ENCODE measurements at regions of chr20 and their contacts with region 1.

Region 1: GRCh38 chr20:50713657-50714101 is 17.7 kb upstream of the PARD6B start:
- DNase-seq: peak; percentile 61
- ATAC-seq: peak; percentile 65
- H3K4me3 ChIP-seq: no peak overlapping the region
- H3K27ac ChIP-seq: no peak overlapping the region
- H3K4me1 ChIP-seq: peaks cover 15% of the 10 kb centered on the region
- H3K27me3 ChIP-seq: no peaks in the 10 kb centered on the region
- CTCF ChIP-seq: peak; percentile 59
- POLR2A ChIP-seq: no peak
- RAD21 ChIP-seq: peak; percentile 66

Region 2: GRCh38 chr20:50675651-50676376 is 37.9 kb before region 1 on chr20:
- CTCF ChIA-PET with region 1: no interaction called
- POLR2A ChIA-PET with region 1: no interaction called
- dilution Hi-C with region 1: no loop called
- in situ Hi-C with region 1: no loop called
- intact Hi-C with region 1: loop called (anchors 1 kb)
- DNase-seq: no peak
- ATAC-seq: peak; percentile 43; the same call in 1 of the 2 replicates
- H3K4me3 ChIP-seq: no peak overlapping the region
- H3K27ac ChIP-seq: no peak overlapping the region
- H3K4me1 ChIP-seq: peaks cover 18% of the 10 kb centered on the region
- H3K27me3 ChIP-seq: no peaks in the 10 kb centered on the region
- CTCF ChIP-seq: no peak
- POLR2A ChIP-seq: no peak
- RAD21 ChIP-seq: no peak

Region 3: GRCh38 chr20:50724851-50725721 is 11.4 kb after region 1 on chr20:
- CTCF ChIA-PET with region 1: interaction called, 11 read pairs
- POLR2A ChIA-PET with region 1: interaction called, 3 read pairs
- dilution Hi-C with region 1: no loop called
- in situ Hi-C with region 1: no loop called
- intact Hi-C with region 1: no loop called
- DNase-seq: peak; percentile 96
- ATAC-seq: peak; percentile 97
- H3K4me3 ChIP-seq: no peak overlapping the region
- H3K27ac ChIP-seq: peak overlapping the region; percentile 66
- H3K4me1 ChIP-seq: peaks cover 13% of the 10 kb centered on the region
- H3K27me3 ChIP-seq: no peaks in the 10 kb centered on the region
- CTCF ChIP-seq: no peak
- POLR2A ChIP-seq: no peak
- RAD21 ChIP-seq: peak; percentile 39

Region 4: GRCh38 chr20:50848341-50848808 is 134.7 kb after region 1 on chr20:
- CTCF ChIA-PET with region 1: no interaction called
- POLR2A ChIA-PET with region 1: no interaction called
- dilution Hi-C with region 1: no loop called
- in situ Hi-C with region 1: no loop called
- intact Hi-C with region 1: no loop called
- DNase-seq: no peak
- ATAC-seq: peak; percentile 38
- H3K4me3 ChIP-seq: no peak overlapping the region
- H3K27ac ChIP-seq: no peak overlapping the region
- H3K4me1 ChIP-seq: peaks cover 9% of the 10 kb centered on the region
- H3K27me3 ChIP-seq: no peaks in the 10 kb centered on the region
- CTCF ChIP-seq: no peak
- POLR2A ChIP-seq: no peak
- RAD21 ChIP-seq: no peak

Measured in IMR-90 (cell line).